Stomach (tissue), 19 donors: ENCODE measurements at regions of chr2 and their contacts with region 1.

Region 1: DNA sequence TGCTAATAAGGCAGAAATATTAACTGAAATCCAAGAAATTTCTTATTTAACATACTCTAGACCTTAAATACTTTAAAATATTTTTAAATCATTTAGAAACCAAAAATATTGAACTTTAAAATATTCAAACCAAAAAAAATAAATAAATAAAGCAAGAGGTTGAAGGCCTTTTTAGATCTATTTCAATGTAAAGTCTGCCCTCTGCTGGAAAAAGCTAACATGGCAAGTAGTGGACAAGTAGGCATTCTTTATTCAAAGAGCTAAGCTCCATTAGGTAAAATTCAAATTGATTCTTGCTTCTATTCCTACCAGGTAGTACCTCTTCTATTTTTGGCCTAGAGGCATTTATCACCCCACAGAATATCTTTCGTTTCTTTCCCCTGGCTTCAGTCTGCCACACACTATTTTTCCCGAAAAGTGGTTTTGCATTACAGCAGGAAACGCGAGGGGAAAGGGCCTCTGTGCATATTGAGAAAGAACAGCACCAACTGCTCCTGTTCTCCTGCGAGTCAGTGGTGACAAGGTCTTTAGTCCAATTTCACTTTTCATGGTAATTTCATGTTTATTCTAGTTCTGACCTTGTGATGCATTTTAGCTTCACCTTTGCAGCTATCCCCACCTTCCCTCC is 20.4 kb downstream of the IFIH1 start:
- DNase-seq: peak; percentile 60 to 88
- H3K4me3 ChIP-seq: no peak overlapping the region
- H3K27ac ChIP-seq: no peak overlapping the region
- H3K4me1 ChIP-seq: peaks cover 0 to 25% (median 12%) of the 10 kb centered on the region in 4 donors
- H3K27me3 ChIP-seq: no peaks in the 10 kb centered on the region
- CTCF ChIP-seq: peak in 5 of 7 experiments; percentile 65 to 89 (median 82)
- EP300 ChIP-seq: no peak
- POLR2A ChIP-seq: no peak

Region 2: DNA sequence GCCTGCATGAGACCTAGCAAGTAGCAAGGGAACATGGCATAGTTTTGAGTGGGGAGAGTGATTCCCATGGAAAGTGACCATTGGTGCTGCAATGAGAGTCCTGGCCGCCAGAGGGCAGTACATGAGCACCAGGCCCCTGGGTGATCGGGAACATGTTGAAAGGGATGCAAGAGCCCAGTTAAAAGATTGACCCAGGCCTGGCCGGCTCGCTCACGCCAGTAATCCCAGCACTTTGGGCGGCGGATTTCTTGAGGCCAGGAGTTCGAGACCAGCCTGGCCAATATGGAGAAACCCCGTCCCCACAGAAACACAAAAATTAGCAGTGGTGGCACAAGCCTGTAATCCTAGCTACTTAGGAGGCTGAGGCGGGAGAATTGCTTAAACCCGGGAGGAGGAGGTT is 77.0 kb before region 1 on chr2:
- intact Hi-C with region 1: loop called (anchors 5 kb)
- DNase-seq: peak; percentile 71 to 79
- H3K4me3 ChIP-seq: no peak overlapping the region
- H3K27ac ChIP-seq: no peak overlapping the region
- H3K4me1 ChIP-seq: peaks cover 0 to 5% (median 0%) of the 10 kb centered on the region in 4 donors
- H3K27me3 ChIP-seq: no peaks in the 10 kb centered on the region
- CTCF ChIP-seq: peak in 5 of 7 experiments; percentile 83 to 91 (median 88)
- EP300 ChIP-seq: no peak
- POLR2A ChIP-seq: no peak